ENCODE measurements at regions of chr1 and their contacts with region 1.

Region 1: GRCh38 chr1:183622884-183623785 is 12.4 kb downstream of the ARPC5 start:
- DNase-seq: peak; percentile 54 to 82 (median 60)
- ATAC-seq: peak; percentile 100
- H3K4me3 ChIP-seq: no peak overlapping the region
- H3K27ac ChIP-seq: no peak overlapping the region
- H3K4me1 ChIP-seq: no peaks in the 10 kb centered on the region
- H3K27me3 ChIP-seq: no peaks in the 10 kb centered on the region
- CTCF ChIP-seq: peak; percentile 78 to 91 (median 90)
- EP300 ChIP-seq: no peak
- POLR2A ChIP-seq: no peak
- RAD21 ChIP-seq: peak; percentile 86 to 88

Region 2: DNA sequence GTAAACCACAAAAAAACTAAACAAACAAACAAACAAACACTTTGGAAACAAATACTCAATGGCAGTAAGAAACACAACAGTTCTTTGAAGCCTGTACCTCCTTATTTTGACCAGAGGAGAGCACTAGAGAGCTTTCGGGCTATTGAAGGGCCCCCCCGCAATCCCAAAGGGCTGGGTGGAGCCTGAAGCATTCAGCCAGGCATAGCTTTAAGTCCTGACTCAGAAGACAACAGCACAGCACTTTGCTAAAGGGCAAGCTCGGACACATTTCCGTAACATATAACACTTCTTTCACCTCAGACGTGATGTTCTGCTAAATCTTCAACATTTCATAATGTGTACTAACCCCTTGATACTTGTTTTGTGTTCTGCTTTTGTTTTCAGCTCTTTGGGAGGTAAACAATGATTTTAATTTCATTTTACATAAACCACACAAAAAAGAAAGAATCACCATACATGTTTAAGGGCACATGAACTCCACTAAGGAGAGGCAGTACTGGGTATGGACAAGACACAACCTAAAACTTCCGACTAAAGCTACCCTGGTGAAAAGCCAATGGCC is 660.5 kb before region 1 on chr1:
- CTCF ChIA-PET with region 1: interaction called, 3 read pairs
- POLR2A ChIA-PET with region 1: no interaction called
- in situ Hi-C with region 1: loop called (anchors 25 kb)
- intact Hi-C with region 1: loop called (anchors 10 kb)
- DNase-seq: peak; percentile 86 to 92 (median 90)
- ATAC-seq: peak; percentile 100
- H3K4me3 ChIP-seq: no peak overlapping the region
- H3K27ac ChIP-seq: no peak overlapping the region
- H3K4me1 ChIP-seq: no peaks in the 10 kb centered on the region; a peak in 1 of 5 replicates
- H3K27me3 ChIP-seq: peaks cover 9 to 21% of the 10 kb centered on the region in 2 experiments; a peak in 3 of 5 replicates
- CTCF ChIP-seq: peak; percentile 91 to 98 (median 94)
- EP300 ChIP-seq: peak; percentile 27; the same call in 1 of the 2 replicates
- POLR2A ChIP-seq: no peak
- RAD21 ChIP-seq: peak; percentile 98 to 99

Region 3: DNA sequence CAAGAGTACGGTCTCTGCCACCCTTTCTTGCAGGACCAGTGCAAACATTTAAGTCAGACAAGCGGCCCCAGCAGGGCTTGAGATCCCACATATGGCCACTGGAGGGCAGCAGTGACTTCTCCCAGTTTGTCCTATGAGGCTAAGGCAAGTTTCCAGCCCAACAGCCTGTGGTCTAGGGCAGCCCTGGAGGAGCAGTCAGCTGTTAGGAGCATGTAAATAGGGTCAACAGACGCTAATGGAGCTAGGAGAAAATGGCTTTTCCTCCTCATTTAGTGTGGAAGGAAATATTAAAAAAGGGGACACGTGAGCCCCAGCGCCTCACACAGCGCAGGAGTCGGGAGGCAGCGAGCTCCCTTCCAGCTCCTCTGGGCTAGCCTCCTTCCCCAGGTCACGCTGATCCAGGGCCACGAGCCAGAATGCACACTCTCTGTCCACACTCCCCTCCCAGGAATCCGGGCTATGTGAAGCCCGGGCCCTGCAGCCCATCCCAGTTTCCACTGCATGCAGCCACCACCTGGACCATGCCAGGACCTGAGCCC is 341.5 kb before region 1 on chr1:
- CTCF ChIA-PET with region 1: interaction called, 13 read pairs
- POLR2A ChIA-PET with region 1: no interaction called
- in situ Hi-C with region 1: loop called (anchors 5 kb)
- intact Hi-C with region 1: loop called (anchors 1 kb)
- DNase-seq: peak; percentile 79 to 85 (median 82)
- ATAC-seq: peak; percentile 98
- H3K4me3 ChIP-seq: no peak overlapping the region
- H3K27ac ChIP-seq: no peak overlapping the region
- H3K4me1 ChIP-seq: no peaks in the 10 kb centered on the region
- H3K27me3 ChIP-seq: peaks cover 19 to 55% of the 10 kb centered on the region in 2 experiments; a peak in 4 of 5 replicates
- CTCF ChIP-seq: peak; percentile 84 to 93 (median 92)
- EP300 ChIP-seq: no peak
- POLR2A ChIP-seq: no peak
- RAD21 ChIP-seq: peak; percentile 82 to 86

Region 4: GRCh38 chr1:183368202-183369108 is 254.7 kb before region 1 on chr1:
- CTCF ChIA-PET with region 1: no interaction called
- POLR2A ChIA-PET with region 1: no interaction called
- in situ Hi-C with region 1: no loop called
- intact Hi-C with region 1: loop called (anchors 5 kb)
- DNase-seq: no peak
- ATAC-seq: peak; percentile 71
- H3K4me3 ChIP-seq: no peak overlapping the region
- H3K27ac ChIP-seq: no peak overlapping the region
- H3K4me1 ChIP-seq: no peaks in the 10 kb centered on the region
- H3K27me3 ChIP-seq: peaks cover 23 to 52% of the 10 kb centered on the region in 2 experiments; a peak in 4 of 5 replicates
- CTCF ChIP-seq: peak in 2 of 3 experiments; percentile 11 to 29; a peak in 2 of 6 replicates
- EP300 ChIP-seq: no peak
- POLR2A ChIP-seq: no peak
- RAD21 ChIP-seq: 0 out of 4 replicates have a peak, but pooled peaks of 1 of the 2 experiments have one; percentile 19

Region 5: DNA sequence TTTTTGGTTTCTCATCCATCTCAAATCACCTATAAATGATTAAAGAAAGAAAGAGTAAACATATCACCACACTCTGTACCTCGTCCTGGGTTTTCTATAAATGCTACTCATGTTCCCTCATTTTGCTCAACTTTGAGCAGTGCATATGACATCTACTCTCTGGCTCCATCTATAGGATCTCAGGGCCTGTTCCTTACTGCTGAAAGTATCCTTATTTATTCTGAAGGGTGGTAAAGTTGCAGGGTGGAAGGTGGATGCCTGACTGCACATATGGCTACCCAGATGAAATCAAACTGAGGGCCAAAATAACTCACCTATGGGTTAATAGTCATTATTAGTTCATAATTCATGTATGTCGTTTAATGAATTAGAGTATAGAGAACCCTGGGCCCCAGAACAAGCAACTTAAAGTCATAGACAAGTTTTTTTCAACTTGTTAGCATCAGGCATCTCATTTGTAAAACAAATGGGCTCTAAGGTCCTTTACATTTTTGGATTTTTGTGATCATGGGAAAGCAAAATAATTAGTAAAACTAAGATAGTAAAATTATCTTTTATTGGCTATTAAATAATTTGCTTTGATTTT is 79.4 kb before region 1 on chr1:
- CTCF ChIA-PET with region 1: no interaction called
- POLR2A ChIA-PET with region 1: no interaction called
- in situ Hi-C with region 1: no loop called
- intact Hi-C with region 1: loop called (anchors 5 kb)
- DNase-seq: peak in 3 of 4 experiments; percentile 27 to 56 (median 46)
- ATAC-seq: peak; percentile 97
- H3K4me3 ChIP-seq: no peak overlapping the region
- H3K27ac ChIP-seq: no peak overlapping the region
- H3K4me1 ChIP-seq: no peaks in the 10 kb centered on the region
- H3K27me3 ChIP-seq: no peaks in the 10 kb centered on the region
- CTCF ChIP-seq: peak; percentile 66 to 74 (median 66)
- EP300 ChIP-seq: no peak
- POLR2A ChIP-seq: no peak
- RAD21 ChIP-seq: peak; percentile 65 to 74

Measured in K562 (cell line).